Tibial artery (tissue), 4 donors: ENCODE measurements at regions of chr17 and their contacts with region 1.

Region 1: DNA sequence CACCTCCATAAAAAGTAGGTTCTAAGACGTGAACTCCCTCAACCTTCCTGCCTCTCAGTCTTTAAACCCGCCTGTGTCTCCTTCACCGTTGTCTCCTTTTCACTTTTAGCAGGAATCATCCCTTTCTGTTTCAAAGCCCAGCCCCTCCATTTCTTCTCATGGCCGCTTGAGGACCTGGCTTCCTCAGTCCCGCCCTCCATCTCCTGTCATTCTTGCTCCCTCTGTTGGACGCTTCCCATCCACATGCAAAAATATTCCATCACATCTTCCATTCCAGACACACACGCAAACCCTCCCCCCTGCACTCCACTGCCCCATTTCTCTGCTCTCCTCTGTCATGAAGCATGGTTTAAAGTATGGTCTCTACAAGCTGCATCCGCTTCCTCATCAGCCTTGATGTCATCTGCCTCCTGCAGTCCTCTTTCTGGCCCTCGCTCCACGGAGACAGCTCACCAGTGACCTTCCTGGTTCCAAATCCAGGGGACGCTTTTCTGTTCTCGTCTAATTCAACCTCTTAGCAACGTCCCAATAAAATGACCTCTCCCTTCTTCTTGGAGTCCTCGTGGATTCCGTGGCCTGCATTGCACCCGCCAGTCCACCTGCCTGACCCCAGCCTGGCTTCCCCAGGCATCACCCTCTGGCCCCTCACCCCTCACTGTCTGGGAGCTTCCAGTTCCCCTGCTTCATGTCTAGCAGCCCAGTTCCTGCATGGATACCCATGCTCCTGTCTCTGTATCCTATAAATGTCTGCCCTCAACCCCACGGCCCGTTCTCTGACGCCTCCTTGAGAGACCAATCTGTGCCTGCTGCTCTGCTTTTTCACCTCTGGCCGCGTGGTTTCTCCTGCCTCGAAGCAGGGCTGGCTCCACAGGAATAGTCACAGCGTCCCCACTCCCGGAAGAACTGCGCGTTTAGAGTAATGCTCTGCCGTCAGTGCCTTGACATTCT is 26.2 kb downstream of the ANKRD40 start:
- DNase-seq: peak; percentile 59 to 70
- H3K4me3 ChIP-seq: no peak overlapping the region
- H3K27ac ChIP-seq: no peak overlapping the region
- H3K4me1 ChIP-seq: peaks cover 0 to 20% (median 9%) of the 10 kb centered on the region in 4 donors
- H3K27me3 ChIP-seq: no peaks in the 10 kb centered on the region
- CTCF ChIP-seq: peak; percentile 53 to 72

Region 2: DNA sequence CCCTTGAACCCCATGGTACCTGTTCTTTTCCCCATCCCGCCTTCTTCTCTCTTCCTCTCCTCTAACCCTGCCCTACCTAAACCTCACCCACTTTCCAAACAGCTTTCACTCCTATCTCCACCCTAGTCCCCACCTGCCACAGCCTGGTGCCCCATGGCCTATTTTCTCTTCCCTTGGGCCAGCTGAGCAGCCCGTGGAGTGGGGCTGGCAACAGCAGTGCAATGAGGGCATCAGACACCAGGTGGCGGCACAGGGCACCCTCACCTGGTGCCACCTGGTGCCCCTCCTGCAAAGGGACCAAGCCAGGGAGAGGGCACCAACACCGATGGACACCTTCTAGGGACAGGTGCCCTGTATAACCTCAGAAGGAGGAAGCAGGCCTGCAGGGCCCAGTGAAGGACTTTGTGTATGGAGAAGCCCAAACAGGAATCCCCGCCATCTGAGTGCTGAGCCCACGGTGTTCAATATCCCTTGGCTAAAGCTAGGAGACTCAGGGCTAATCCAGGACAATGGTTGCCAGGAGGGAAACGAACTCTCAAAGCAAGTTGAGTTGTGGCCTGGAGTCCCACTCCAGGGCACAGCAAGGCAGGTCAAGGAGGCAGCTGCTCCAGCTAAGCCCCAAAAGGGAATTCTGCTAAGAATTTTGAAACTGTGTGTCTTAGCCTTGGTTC is 50.9 kb before region 1 on chr17:
- intact Hi-C with region 1: loop called (anchors 10 kb)
- DNase-seq: no peak
- H3K4me3 ChIP-seq: no peak overlapping the region
- H3K27ac ChIP-seq: no peak overlapping the region
- H3K4me1 ChIP-seq: peaks cover 0 to 31% (median 24%) of the 10 kb centered on the region in 4 donors
- H3K27me3 ChIP-seq: peaks cover 0 to 35% of the 10 kb centered on the region in 2 donors
- CTCF ChIP-seq: peak; percentile 74 to 80

Region 3: GRCh38 chr17:50783193-50783660 is 101.7 kb after region 1 on chr17:
- intact Hi-C with region 1: no loop called
- DNase-seq: peak; percentile 77 to 89
- H3K4me3 ChIP-seq: no peak overlapping the region
- H3K27ac ChIP-seq: no peak overlapping the region
- H3K4me1 ChIP-seq: peaks cover 0 to 19% (median 6%) of the 10 kb centered on the region in 4 donors
- H3K27me3 ChIP-seq: no peaks in the 10 kb centered on the region
- CTCF ChIP-seq: peak; percentile 97 to 99

Region 4: GRCh38 chr17:50931144-50931908 is 249.8 kb after region 1 on chr17:
- intact Hi-C with region 1: no loop called
- DNase-seq: peak; percentile 89 to 96
- H3K4me3 ChIP-seq: peak overlapping the region; percentile 46 to 55
- H3K27ac ChIP-seq: peak overlapping the region; percentile 96 to 97
- H3K4me1 ChIP-seq: peaks cover 4 to 49% (median 35%) of the 10 kb centered on the region in 4 donors
- H3K27me3 ChIP-seq: no peaks in the 10 kb centered on the region
- CTCF ChIP-seq: no peak